Cardiac septum (tissue), 1 donor: ENCODE measurements at regions of chr2 and their contacts with region 1.

Region 1: DNA sequence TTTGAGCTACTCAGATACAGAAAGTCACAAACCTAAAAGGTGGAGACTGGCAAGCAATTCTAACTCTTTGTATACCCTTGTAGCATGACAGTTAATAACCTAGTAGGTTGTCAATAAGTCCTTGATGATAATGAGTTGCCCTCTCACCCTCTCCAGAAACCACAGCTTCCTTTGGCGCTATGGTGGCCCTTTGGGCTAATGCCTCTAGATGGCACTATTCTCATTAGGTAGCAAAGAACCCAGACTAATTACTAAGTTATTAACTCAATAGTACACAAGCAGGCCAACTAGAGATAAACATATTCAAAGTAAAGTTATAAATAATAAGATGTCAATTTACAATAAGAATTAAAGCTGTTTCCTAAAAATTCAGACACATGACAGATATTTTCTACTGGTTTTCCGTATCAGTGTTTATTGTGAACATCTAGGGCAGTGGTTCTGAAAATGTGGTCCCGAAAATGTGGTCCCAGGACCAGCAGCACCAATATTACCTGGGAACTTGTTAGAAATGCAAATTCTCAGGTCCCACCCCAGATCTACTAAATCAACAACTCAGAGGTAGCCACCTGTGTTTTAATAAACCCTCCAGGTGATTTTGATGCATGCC is 41.1 kb downstream of the LDAH start:
- DNase-seq: no peak

Region 2: DNA sequence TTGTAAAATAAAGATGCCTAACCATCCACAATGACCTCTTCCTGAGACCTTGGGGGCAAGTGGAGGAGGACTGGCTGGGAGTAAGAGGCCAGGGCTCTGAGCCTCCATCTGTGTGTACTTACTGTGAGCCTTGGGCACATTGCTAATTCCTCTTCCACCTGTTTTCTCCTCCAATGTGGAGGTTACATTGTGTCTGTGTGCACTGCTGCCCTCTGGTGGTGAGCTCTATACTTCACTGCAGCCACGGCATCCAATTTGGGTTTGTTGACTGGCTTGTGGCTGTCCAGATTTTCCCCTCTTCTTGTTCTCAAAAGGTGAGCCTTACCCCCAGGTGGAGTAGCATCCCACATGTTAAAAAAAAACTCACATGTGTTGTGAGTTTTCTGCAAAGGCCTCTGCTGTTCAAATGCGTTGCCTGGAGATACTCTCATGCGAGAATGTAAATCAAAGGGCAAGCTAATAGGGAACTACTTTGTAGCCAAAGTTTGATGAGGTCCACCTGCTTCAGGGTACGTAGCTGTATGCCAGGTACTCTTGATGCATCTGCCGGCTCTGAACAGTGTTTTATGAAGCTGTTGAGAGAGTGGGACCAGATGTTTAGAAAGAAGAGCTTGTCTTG is 181.3 kb after region 1 on chr2:
- intact Hi-C with region 1: loop called (anchors 2 kb)
- DNase-seq: peak; percentile 79

Region 3: GRCh38 chr2:22290302-22290701 is 1508.5 kb after region 1 on chr2:
- intact Hi-C with region 1: loop called (anchors 10 kb)
- DNase-seq: no peak